PC-9 (cell line): ENCODE measurements at regions of chr1 and their contacts with region 1.

Region 1: DNA sequence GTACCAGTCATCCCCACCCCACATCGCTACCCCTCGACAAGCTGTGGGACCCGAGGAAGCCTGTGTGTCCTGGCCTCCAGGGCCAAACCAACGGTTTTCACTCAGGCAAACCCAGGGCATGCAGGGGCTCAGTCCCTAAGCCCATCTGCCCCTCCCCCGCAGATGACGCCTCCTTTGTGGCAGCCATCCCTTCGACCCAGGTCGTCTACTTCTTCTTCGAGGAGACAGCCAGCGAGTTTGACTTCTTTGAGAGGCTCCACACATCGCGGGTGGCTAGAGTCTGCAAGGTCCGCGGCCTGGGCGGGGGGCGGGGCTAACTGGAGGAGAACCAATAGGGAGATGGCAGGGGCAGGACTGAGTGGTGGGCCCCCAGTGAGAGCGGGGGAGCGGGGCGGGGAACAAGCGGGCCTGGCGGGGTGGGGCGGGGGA is 7.4 kb downstream of the SEMA4A start:
- DNase-seq: no peak
- H3K4me3 ChIP-seq: no peak overlapping the region
- H3K27ac ChIP-seq: no peak overlapping the region
- H3K4me1 ChIP-seq: no peaks in the 10 kb centered on the region
- H3K27me3 ChIP-seq: no peaks in the 10 kb centered on the region
- CTCF ChIP-seq: no peak

Region 2: DNA sequence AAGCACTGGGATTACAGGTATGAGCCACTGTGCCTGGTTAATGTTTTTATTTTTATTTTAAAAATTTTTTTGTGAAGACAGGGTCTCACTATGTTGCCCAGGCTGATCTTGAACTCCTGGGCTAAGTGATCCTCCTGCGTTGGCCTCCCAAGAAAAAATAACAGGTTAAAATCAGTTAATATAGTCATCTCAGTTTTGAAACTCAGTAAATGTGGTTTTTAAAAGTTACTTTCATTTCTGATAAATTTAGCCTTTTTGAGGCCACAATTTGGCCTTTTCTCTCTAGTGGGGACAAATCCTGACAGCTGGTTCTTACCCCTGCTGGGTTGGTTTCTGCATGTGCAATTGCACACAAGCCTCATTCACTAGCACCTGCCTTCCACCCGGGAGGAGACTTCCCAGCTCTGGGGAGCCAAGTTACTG is 65.4 kb after region 1 on chr1:
- CTCF ChIA-PET with region 1: no interaction called
- POLR2A ChIA-PET with region 1: no interaction called
- intact Hi-C with region 1: no loop called
- DNase-seq: no peak
- H3K4me3 ChIP-seq: no peak overlapping the region
- H3K27ac ChIP-seq: no peak overlapping the region
- H3K4me1 ChIP-seq: 0 out of 2 replicates have a peak, but pooled peaks cover 5% of the 10 kb centered on the region
- H3K27me3 ChIP-seq: no peaks in the 10 kb centered on the region
- CTCF ChIP-seq: no peak

Region 3: GRCh38 chr1:156241311-156241811 is 80.6 kb after region 1 on chr1:
- CTCF ChIA-PET with region 1: interaction called, 12 read pairs
- POLR2A ChIA-PET with region 1: no interaction called
- intact Hi-C with region 1: no loop called
- DNase-seq: peak in 1 of 2 experiments; percentile 78
- H3K4me3 ChIP-seq: no peak overlapping the region
- H3K27ac ChIP-seq: no peak overlapping the region
- H3K4me1 ChIP-seq: no peaks in the 10 kb centered on the region
- H3K27me3 ChIP-seq: no peaks in the 10 kb centered on the region
- CTCF ChIP-seq: no peak

Region 4: GRCh38 chr1:156276966-156277381 is 116.2 kb after region 1 on chr1:
- CTCF ChIA-PET with region 1: no interaction called
- POLR2A ChIA-PET with region 1: no interaction called
- intact Hi-C with region 1: no loop called
- DNase-seq: no peak
- H3K4me3 ChIP-seq: no peak overlapping the region
- H3K27ac ChIP-seq: no peak overlapping the region
- H3K4me1 ChIP-seq: peaks cover 10% of the 10 kb centered on the region
- H3K27me3 ChIP-seq: no peaks in the 10 kb centered on the region
- CTCF ChIP-seq: no peak

Region 5: GRCh38 chr1:156346636-156347035 is 185.9 kb after region 1 on chr1:
- CTCF ChIA-PET with region 1: interaction called, 17 read pairs
- POLR2A ChIA-PET with region 1: no interaction called
- intact Hi-C with region 1: no loop called
- DNase-seq: no peak
- H3K4me3 ChIP-seq: no peak overlapping the region
- H3K27ac ChIP-seq: no peak overlapping the region
- H3K4me1 ChIP-seq: no peaks in the 10 kb centered on the region
- H3K27me3 ChIP-seq: no peaks in the 10 kb centered on the region
- CTCF ChIP-seq: no peak